CD4-positive, alpha-beta T cell (primary cell): ENCODE measurements at regions of chr19 and their contacts with region 1.

Region 1: DNA sequence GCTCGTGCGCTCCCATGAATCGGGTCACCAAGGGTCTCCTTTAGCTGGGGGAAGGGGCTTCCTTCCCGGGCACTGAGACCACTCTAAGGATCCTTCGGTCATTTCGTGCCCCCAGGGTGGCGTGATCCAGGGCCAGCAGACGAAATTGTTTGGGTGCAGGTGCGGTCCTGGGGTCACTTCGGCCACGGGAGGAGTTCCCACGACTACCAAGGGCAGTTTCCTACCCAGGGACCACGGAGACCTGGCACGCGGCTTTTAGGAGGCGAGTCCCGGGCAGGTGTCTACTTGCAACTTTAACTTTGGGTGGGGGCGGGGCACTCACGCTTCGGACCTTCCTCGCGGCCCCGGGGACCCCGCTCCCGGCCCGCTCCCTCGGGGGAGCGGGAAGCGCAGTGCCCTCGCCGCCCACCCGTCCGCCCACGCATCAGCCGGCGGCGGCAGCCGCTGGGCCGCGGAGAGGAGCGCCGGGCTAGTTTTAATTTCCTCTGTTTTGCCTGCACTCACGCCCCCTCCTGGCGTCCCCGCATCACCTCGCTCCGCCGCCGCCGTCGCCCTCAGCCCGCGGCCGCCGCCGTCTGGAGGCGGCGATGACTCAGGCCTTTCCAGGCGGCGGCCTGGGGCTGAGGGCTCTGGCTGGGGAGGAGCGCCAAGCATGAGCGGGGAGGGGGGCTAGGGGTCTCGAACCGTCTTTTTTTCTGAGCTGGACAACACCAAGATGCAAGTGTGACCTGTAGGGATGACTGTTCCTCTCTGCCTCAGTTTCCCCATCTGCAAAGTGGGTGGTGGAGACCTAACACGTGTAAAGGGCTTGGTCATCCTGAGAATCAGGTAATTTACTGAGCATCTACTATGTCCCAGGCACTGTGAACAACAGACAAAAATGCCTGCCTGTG is 21.8 kb downstream of the OLFM2 start:
- DNase-seq: peak; percentile 65 to 91 (median 80)
- ATAC-seq: peak; percentile 90
- H3K4me3 ChIP-seq: peak overlapping the region; percentile 45
- H3K4me3 Mint-ChIP-seq: peak overlapping the region; percentile 78
- H3K27ac ChIP-seq: no peak overlapping the region
- H3K27ac Mint-ChIP-seq: no peak overlapping the region
- H3K4me1 ChIP-seq: peaks cover 17% of the 10 kb centered on the region
- H3K4me1 Mint-ChIP-seq: peaks cover 7% of the 10 kb centered on the region
- H3K27me3 ChIP-seq: peaks cover 16 to 32% of the 10 kb centered on the region in 2 experiments
- H3K27me3 Mint-ChIP-seq: peaks cover 36% of the 10 kb centered on the region
- CTCF ChIP-seq: peak; percentile 63

Region 2: DNA sequence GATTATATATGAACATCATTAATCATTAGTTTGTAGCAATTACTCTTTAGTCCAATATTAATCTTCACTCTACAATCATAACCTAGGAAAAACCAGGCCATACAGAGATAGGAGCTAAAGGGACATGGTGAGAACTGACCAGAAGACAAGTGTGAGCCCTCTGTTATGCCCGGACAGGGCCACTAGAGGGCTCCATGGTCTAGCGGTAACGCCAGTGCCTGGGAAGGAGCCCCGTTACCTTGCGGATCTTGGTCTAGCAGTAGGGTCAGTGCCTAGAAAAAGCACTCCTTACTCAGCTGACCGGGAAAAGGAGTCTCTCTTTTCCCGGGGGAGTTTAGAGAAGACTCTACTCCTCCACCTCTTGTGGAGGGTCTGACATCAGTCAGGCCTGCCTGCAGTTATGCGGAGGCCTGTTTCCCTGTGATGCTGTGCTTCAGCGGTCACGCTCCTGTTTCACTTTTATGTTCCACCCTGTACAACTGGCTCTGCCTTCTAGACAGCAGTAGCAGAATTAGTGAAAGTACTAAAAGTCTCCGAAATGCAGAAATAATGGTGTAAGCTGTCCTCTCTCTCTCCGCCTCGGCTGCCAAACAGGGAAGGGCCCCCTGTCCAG is 709.0 kb before region 1 on chr19:
- CTCF ChIA-PET with region 1: no interaction called
- POLR2A ChIA-PET with region 1: no interaction called
- intact Hi-C with region 1: loop called in 1 of 2 experiments (anchors 10 kb)
- DNase-seq: peak; percentile 40 to 78 (median 58)
- ATAC-seq: peak; percentile 58
- H3K4me3 ChIP-seq: peak overlapping the region; percentile 20
- H3K4me3 Mint-ChIP-seq: peak overlapping the region; percentile 56
- H3K27ac ChIP-seq: no peak overlapping the region
- H3K27ac Mint-ChIP-seq: no peak overlapping the region
- H3K4me1 ChIP-seq: peaks cover 3% of the 10 kb centered on the region
- H3K4me1 Mint-ChIP-seq: no peaks in the 10 kb centered on the region
- H3K27me3 ChIP-seq: no peaks in the 10 kb centered on the region
- H3K27me3 Mint-ChIP-seq: peaks cover 8% of the 10 kb centered on the region
- CTCF ChIP-seq: peak; percentile 96

Region 3: GRCh38 chr19:9621156-9622037 is 293.2 kb before region 1 on chr19 and contains the start of gene ZNF561:
- CTCF ChIA-PET with region 1: no interaction called
- POLR2A ChIA-PET with region 1: no interaction called
- intact Hi-C with region 1: loop called (anchors 1 kb)
- DNase-seq: peak; percentile 81 to 96 (median 85)
- ATAC-seq: peak; percentile 90
- H3K4me3 ChIP-seq: peak within 1 kb of the TSS; percentile 77
- H3K4me3 Mint-ChIP-seq: peak within 1 kb of the TSS; percentile 97
- H3K27ac ChIP-seq: peak within 1 kb of the TSS; percentile 93 to 94
- H3K27ac Mint-ChIP-seq: peak within 1 kb of the TSS; percentile 99
- H3K4me1 ChIP-seq: peaks cover 20% of the 10 kb centered on the region
- H3K4me1 Mint-ChIP-seq: peaks cover 25% of the 10 kb centered on the region
- H3K27me3 ChIP-seq: no peaks in the 10 kb centered on the region
- H3K27me3 Mint-ChIP-seq: peaks cover 4% of the 10 kb centered on the region
- CTCF ChIP-seq: no peak
- total RNA-seq, gene ZNF561: 45.1 to 46.2 TPM

Region 4: DNA sequence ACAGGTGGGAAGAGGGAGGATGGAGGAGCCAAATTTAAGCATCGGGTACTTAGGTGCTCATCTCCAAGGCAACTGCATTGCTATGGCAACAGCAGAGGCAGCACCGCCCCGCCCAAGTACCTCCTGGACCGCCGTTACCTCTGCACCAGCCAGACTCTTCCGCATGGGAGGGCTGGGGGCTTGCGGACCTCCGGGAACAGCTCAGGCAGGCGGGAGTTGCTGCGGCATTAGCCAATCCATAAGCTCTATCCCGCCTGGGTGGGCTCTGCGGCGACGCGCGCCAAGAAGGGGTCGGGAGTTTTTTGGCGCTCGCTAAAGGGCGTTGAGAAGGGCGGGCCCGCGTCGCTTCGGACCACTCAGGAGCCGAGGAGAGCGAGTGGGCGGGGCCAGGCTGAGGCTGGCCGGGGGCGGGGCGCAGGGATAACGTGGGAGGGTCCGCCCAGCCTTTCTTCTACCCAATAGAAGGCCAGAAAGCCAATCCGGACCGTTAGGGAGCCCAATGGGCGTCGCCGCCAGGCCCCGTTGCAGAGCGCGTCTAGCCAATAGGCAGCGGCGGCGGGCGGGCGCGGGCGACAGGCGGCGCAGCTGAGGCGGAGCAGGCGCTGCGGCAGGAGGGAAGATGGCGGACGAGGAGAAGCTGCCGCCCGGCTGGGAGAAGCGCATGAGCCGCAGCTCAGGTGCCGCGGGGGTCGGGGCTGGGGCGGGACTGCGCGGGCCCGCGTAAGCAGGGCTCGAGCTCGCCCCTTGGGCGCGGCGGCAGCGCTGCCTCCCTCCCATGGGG is 79.6 kb before region 1 on chr19 and contains the start of gene PIN1:
- CTCF ChIA-PET with region 1: no interaction called
- POLR2A ChIA-PET with region 1: interaction called, 3 read pairs
- intact Hi-C with region 1: loop called in 1 of 2 experiments (anchors 1 kb)
- DNase-seq: peak; percentile 98 to 100 (median 99)
- ATAC-seq: peak; percentile 94
- H3K4me3 ChIP-seq: peak within 1 kb of the TSS; percentile 81
- H3K4me3 Mint-ChIP-seq: peak within 1 kb of the TSS; percentile 96
- H3K27ac ChIP-seq: peak within 1 kb of the TSS; percentile 40 to 76
- H3K27ac Mint-ChIP-seq: peak within 1 kb of the TSS; percentile 94
- H3K4me1 ChIP-seq: peaks cover 33% of the 10 kb centered on the region
- H3K4me1 Mint-ChIP-seq: peaks cover 23% of the 10 kb centered on the region
- H3K27me3 ChIP-seq: no peaks in the 10 kb centered on the region
- H3K27me3 Mint-ChIP-seq: no peaks in the 10 kb centered on the region
- CTCF ChIP-seq: peak; percentile 43
- total RNA-seq, gene PIN1: 33.2 to 35.3 TPM

Region 5: GRCh38 chr19:9848060-9848459 is 66.5 kb before region 1 on chr19:
- CTCF ChIA-PET with region 1: no interaction called
- POLR2A ChIA-PET with region 1: no interaction called
- intact Hi-C with region 1: loop called (anchors 1 kb)
- DNase-seq: peak in 13 of 14 experiments; percentile 27 to 73 (median 50)
- ATAC-seq: peak; percentile 68
- H3K4me3 ChIP-seq: no peak overlapping the region
- H3K4me3 Mint-ChIP-seq: no peak overlapping the region
- H3K27ac ChIP-seq: no peak overlapping the region
- H3K27ac Mint-ChIP-seq: no peak overlapping the region
- H3K4me1 ChIP-seq: peaks cover 25% of the 10 kb centered on the region
- H3K4me1 Mint-ChIP-seq: peaks cover 34% of the 10 kb centered on the region
- H3K27me3 ChIP-seq: no peaks in the 10 kb centered on the region
- H3K27me3 Mint-ChIP-seq: no peaks in the 10 kb centered on the region
- CTCF ChIP-seq: peak; percentile 71

Region 6: GRCh38 chr19:9865732-9866501 is 48.6 kb before region 1 on chr19:
- CTCF ChIA-PET with region 1: no interaction called
- POLR2A ChIA-PET with region 1: no interaction called
- intact Hi-C with region 1: loop called in 1 of 2 experiments (anchors 2 kb)
- DNase-seq: peak in 12 of 14 experiments; percentile 26 to 84 (median 49)
- ATAC-seq: peak; percentile 78
- H3K4me3 ChIP-seq: no peak overlapping the region
- H3K4me3 Mint-ChIP-seq: peak overlapping the region; percentile 70
- H3K27ac ChIP-seq: no peak overlapping the region
- H3K27ac Mint-ChIP-seq: peak overlapping the region; percentile 90
- H3K4me1 ChIP-seq: peaks cover 66% of the 10 kb centered on the region
- H3K4me1 Mint-ChIP-seq: peaks cover 56% of the 10 kb centered on the region
- H3K27me3 ChIP-seq: no peaks in the 10 kb centered on the region
- H3K27me3 Mint-ChIP-seq: no peaks in the 10 kb centered on the region
- CTCF ChIP-seq: no peak